Right ventricle myocardium superior (tissue), 1 donor: ENCODE measurements at regions of chr20 and their contacts with region 1.

Region 1: DNA sequence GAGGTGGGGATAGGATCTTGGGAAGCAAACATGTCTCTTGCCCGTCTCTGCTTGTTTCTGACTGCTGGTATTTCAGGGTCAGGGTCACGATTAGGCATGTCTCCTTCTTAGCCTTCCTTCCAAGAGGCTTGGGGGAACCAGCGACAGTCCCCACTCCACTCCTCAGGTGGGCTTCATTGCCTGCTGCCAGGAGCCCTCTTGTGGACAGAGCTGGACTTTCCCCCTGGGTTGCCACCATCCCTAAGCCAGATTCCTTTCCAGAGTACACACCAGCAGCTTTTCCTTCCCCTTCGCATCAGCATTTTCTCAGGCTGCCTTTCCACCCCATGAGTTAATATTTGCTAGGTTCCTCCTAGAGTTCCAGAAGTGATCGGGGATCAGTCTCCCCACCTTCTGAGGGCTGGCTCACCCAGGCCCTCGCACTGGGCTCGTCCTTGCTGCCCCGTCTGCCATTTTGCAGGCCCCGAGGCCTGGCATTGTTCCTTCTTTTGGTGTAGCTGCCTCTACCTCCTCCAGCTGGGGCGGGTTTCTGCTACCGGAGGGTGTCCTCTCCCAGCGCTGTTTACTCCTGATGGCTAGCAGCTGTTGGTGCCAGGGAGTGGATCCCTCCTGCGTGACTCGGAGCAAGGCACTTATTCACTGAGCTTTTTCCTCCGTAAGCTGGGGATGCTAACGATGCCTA is 8.8 kb upstream of the C20orf144 start:
- DNase-seq: no peak
- ATAC-seq: peak; percentile 68

Region 2: DNA sequence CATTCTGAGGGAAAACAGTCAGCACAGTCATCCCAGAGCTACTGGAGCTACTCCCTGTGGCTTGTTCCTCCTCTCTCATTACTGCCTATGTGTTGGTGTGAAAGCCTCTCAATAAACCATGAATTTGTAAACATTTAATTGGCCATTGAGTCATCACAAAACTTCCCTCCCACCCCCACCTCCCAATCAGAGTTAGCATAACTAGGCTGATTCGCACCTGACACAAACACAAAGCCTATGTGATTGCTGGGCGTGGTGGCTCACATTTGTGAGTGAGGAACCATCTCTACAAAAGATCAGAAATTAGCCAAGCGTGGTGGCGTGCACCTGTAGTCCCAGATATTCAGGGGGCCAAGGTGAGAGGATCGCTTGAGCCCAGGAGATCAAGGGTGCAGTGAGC is 192.6 kb before region 1 on chr20:
- intact Hi-C with region 1: loop called (anchors 5 kb)
- DNase-seq: no peak
- ATAC-seq: no peak

Region 3: DNA sequence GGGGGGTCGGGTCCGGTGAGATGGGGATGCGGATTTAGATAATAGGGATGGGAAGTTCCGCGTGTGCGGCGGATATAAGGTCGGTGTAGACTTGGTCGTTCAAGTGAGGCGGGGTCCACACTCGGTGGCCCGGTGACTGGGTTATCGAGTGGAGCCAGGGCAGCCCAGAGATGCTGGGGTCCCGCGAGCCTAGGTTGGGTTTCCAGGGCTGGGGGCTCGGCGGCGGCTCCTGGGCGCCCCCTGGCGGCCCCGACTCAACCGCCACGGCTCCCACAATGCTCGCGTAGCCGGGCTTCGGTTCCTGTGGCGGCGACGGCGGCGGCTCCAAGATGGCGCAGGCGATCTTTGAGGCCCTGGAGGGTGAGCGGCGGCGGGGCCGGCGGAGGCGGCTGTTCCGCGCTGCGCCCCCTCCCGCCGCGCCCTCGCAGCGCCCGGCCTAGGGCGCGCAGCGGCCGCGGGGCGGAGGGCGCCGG is 78.4 kb after region 1 on chr20 and contains the start of gene ZNF341:
- intact Hi-C with region 1: no loop called
- DNase-seq: peak; percentile 94
- ATAC-seq: peak; percentile 85
- total RNA-seq, gene ZNF341: 1.9 TPM

Region 4: DNA sequence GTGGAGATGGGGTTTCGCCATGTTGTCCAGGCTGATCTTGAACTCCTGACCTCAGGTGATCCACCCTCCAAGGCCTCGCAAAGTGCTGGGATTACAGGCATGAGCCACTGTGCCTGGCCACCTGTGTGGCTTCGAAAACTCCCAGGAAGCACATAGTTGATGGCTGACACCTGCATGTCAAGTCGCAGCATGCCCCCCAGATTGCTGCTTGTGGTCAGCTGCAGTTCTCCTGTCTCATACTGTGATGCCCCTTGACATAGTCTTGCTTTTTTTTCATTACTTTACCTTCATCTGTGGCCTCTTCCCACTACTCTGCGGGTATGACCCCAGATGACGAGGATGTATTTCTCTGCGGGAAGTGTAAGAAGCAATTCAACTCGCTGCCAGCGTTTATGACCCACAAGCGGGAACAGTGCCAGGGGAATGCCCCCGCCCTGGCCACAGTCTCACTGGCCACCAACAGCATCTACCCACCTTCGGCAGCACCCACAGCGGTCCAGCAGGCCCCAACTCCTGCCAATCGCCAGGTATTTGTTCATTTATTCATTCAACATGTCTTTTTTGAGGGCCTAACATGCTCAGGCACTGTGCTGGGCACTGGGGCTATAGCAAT is 91.5 kb after region 1 on chr20:
- intact Hi-C with region 1: no loop called
- DNase-seq: no peak
- ATAC-seq: no peak

Region 5: GRCh38 chr20:34334654-34335407 is 681.5 kb after region 1 on chr20:
- intact Hi-C with region 1: no loop called
- DNase-seq: no peak
- ATAC-seq: no peak

Region 6: GRCh38 chr20:34615477-34615876 is 962.1 kb after region 1 on chr20:
- intact Hi-C with region 1: no loop called
- DNase-seq: no peak
- ATAC-seq: no peak